ENCODE measurements at regions of chr16 and their contacts with region 1.

Region 1: GRCh38 chr16:52657924-52658323 is 111.0 kb upstream of the TOX3 start:
- DNase-seq: no peak
- H3K4me3 ChIP-seq: no peak overlapping the region
- H3K27ac ChIP-seq: no peak overlapping the region
- H3K4me1 ChIP-seq: no peaks in the 10 kb centered on the region
- CTCF ChIP-seq: no peak

Region 2: DNA sequence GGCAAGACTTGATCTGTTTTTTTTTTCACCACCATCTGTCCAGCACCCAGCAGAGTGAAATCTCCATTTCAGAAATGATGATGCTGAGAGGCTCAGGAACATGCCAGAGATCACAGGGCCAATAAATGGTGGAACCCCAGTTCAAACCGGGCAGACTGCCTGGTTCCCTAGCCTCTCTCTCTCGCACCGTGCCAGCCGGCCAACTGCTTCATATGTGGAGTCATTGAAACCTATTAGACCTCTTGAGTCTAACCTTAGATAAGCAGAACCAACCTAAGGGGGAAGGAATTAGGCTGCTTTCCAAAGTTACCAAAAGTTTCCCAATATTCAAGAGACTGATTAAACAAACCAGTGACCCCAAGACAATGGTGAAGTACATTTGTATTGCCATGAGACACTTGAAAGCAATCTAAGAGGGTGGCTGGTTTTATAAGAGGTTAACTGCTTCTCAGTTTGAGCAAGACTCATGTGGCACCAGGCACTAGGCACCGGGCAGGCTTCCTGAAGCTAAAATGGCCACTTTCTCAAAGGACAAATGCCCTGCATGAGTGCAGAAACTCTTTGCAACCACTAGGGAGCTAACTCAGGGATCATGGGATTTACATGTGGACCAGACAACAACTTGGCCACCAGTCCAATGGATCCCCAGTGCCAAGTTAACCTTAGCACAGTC is 129.4 kb before region 1 on chr16:
- CTCF ChIA-PET with region 1: no interaction called
- POLR2A ChIA-PET with region 1: no interaction called
- intact Hi-C with region 1: no loop called
- DNase-seq: no peak
- H3K4me3 ChIP-seq: no peak overlapping the region
- H3K27ac ChIP-seq: no peak overlapping the region
- H3K4me1 ChIP-seq: no peaks in the 10 kb centered on the region
- CTCF ChIP-seq: no peak

Region 3: DNA sequence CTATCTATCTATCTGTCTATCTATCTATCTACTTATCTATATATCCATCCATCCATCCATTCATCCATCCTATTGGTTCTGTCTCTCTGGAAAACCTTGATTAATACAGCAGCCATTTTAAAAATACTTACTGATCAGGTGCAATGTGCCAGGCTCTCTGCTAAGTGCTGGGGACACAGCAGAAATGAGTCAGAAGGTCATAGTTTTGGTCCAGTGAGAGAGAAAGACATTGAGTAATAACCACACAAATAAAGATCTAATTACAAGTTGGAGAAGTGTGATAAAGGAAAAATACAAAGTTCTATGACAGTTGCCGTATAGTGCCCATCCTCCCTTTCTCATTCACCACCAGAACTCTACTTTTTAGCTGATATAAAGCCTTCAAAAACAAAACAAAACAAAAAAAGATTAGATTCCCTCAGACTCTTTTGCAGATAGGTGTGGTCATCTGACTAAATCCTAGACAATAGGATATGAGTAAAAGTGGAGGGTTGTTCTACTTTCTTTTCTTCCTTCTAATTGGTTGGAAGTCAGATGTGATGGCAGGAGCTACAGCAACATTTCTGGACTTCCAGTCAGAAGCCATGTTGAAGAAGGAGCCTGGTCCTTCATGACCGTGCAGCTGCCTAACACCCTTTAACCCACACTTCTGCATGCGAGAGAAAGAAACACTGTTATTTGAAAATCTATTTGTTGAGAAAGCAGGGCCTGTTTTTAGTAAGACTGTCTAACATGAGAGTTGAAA is 39.0 kb before region 1 on chr16:
- CTCF ChIA-PET with region 1: no interaction called
- POLR2A ChIA-PET with region 1: no interaction called
- intact Hi-C with region 1: loop called (anchors 5 kb)
- DNase-seq: no peak
- H3K4me3 ChIP-seq: no peak overlapping the region
- H3K27ac ChIP-seq: no peak overlapping the region
- H3K4me1 ChIP-seq: no peaks in the 10 kb centered on the region
- CTCF ChIP-seq: no peak

Region 4: DNA sequence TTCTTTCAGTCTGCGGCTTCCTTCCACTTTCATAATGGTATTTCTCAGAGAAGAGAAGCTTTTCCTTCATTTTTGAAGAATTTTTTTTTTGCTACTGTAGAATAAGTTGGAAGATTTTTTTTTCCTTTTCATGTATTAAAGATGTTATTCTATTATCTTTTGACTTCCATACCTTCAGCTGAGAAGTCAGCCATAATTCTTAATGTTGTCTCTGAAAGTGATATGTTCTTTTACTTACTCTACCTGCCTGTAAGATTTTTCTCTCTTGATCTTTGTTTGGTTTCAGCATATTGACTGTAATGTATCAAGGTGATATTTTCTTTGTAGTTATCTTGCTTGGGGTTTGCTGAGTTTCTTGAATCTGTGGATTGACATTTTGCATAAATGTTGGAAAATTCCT is 32.5 kb after region 1 on chr16:
- CTCF ChIA-PET with region 1: no interaction called
- POLR2A ChIA-PET with region 1: no interaction called
- intact Hi-C with region 1: no loop called
- DNase-seq: no peak
- H3K4me3 ChIP-seq: no peak overlapping the region
- H3K27ac ChIP-seq: no peak overlapping the region
- H3K4me1 ChIP-seq: no peaks in the 10 kb centered on the region
- CTCF ChIP-seq: no peak

Measured in OCI-LY7 (cell line).